CD8-positive, alpha-beta T cell (primary cell): ENCODE measurements at regions of chr11 and their contacts with region 1.

Region 1: DNA sequence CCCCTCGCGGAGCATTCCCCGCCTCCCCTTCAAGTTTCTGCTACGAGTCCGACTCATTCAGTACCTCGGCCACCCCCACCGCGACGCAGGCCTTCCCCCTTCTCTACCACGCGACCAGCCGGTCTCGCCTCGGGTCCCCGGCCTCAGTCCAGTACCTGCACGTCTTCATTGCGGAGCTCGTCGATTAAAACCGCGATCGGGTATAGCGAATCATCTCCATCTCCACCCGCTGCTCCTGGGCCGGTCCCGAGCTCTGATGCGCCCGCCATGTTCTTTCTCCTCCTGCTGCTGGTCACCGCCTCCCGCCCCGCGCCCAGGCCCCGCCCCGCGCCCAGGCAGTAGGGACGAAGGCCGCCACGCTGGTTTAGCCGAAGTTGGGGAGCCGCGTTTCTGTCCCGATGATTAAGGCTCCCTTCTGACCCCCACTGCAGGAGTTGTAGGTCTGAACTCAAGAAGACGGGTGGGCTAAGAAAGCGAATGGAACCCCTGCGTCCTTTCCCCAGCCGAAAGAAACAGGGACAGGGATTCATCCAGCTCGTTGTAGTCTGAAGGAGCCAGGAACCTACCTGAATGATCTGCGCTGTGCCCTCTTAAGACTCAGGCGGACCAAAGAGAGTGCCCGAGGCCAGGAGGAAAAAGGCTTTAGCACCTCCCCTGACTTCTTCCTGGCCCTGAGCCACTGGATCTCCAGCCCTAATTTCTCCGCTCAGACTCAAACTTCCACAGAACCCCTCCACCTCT is at the start of gene PPP2R1B:
- DNase-seq: peak; percentile 33 to 83 (median 73)
- ATAC-seq: peak; percentile 98
- H3K4me3 ChIP-seq: peak within 1 kb of the TSS; percentile 86 to 97
- H3K4me3 Mint-ChIP-seq: peak within 1 kb of the TSS; percentile 99
- H3K27ac ChIP-seq: peak within 1 kb of the TSS; percentile 63 to 67
- H3K27ac Mint-ChIP-seq: peak within 1 kb of the TSS; percentile 97
- H3K4me1 ChIP-seq: peaks cover 12% of the 10 kb centered on the region
- H3K4me1 Mint-ChIP-seq: peaks cover 39% of the 10 kb centered on the region
- H3K27me3 ChIP-seq: no peaks in the 10 kb centered on the region
- H3K27me3 Mint-ChIP-seq: no peaks in the 10 kb centered on the region
- CTCF ChIP-seq: no peak
- total RNA-seq, gene PPP2R1B: 47.4 to 53.8 TPM

Region 2: GRCh38 chr11:111586388-111586831 is 179.9 kb before region 1 on chr11:
- CTCF ChIA-PET with region 1: interaction called, 12 read pairs
- POLR2A ChIA-PET with region 1: interaction called, 5 read pairs
- intact Hi-C with region 1: no loop called
- DNase-seq: peak in 8 of 9 experiments; percentile 8 to 77 (median 58)
- ATAC-seq: peak; percentile 83
- H3K4me3 ChIP-seq: no peak overlapping the region
- H3K4me3 Mint-ChIP-seq: no peak overlapping the region
- H3K27ac ChIP-seq: no peak overlapping the region
- H3K27ac Mint-ChIP-seq: no peak overlapping the region
- H3K4me1 ChIP-seq: no peaks in the 10 kb centered on the region
- H3K4me1 Mint-ChIP-seq: no peaks in the 10 kb centered on the region
- H3K27me3 ChIP-seq: no peaks in the 10 kb centered on the region
- H3K27me3 Mint-ChIP-seq: no peaks in the 10 kb centered on the region
- CTCF ChIP-seq: peak; percentile 76

Region 3: GRCh38 chr11:111870886-111871692 is 104.8 kb after region 1 on chr11 and contains the start of gene ALG9:
- CTCF ChIA-PET with region 1: no interaction called
- POLR2A ChIA-PET with region 1: interaction called, 4 read pairs
- intact Hi-C with region 1: loop called in 1 of 2 experiments (anchors 2 kb)
- DNase-seq: peak; percentile 80 to 93 (median 89)
- ATAC-seq: peak; percentile 87
- H3K4me3 ChIP-seq: peak within 1 kb of the TSS; percentile 51 to 70
- H3K4me3 Mint-ChIP-seq: peak within 1 kb of the TSS; percentile 93
- H3K27ac ChIP-seq: peak within 1 kb of the TSS; percentile 76 to 77
- H3K27ac Mint-ChIP-seq: peak within 1 kb of the TSS; percentile 97
- H3K4me1 ChIP-seq: peaks cover 18% of the 10 kb centered on the region
- H3K4me1 Mint-ChIP-seq: peaks cover 34% of the 10 kb centered on the region
- H3K27me3 ChIP-seq: no peaks in the 10 kb centered on the region
- H3K27me3 Mint-ChIP-seq: no peaks in the 10 kb centered on the region
- CTCF ChIP-seq: peak; percentile 18
- total RNA-seq, gene ALG9: 35.5 to 36.9 TPM

Region 4: GRCh38 chr11:111982019-111982464 is 215.8 kb after region 1 on chr11:
- CTCF ChIA-PET with region 1: no interaction called
- POLR2A ChIA-PET with region 1: no interaction called
- intact Hi-C with region 1: no loop called
- DNase-seq: peak; percentile 24 to 64 (median 51)
- ATAC-seq: peak; percentile 90
- H3K4me3 ChIP-seq: no peak overlapping the region
- H3K4me3 Mint-ChIP-seq: no peak overlapping the region
- H3K27ac ChIP-seq: no peak overlapping the region
- H3K27ac Mint-ChIP-seq: no peak overlapping the region
- H3K4me1 ChIP-seq: peaks cover 7% of the 10 kb centered on the region
- H3K4me1 Mint-ChIP-seq: peaks cover 7% of the 10 kb centered on the region
- H3K27me3 ChIP-seq: peaks cover 0 to 5% of the 10 kb centered on the region in 2 experiments
- H3K27me3 Mint-ChIP-seq: peaks cover 26% of the 10 kb centered on the region
- CTCF ChIP-seq: peak; percentile 31